Common myeloid progenitor, CD34-positive (primary cell): ENCODE measurements at regions of chr4 and their contacts with region 1.

Region 1: DNA sequence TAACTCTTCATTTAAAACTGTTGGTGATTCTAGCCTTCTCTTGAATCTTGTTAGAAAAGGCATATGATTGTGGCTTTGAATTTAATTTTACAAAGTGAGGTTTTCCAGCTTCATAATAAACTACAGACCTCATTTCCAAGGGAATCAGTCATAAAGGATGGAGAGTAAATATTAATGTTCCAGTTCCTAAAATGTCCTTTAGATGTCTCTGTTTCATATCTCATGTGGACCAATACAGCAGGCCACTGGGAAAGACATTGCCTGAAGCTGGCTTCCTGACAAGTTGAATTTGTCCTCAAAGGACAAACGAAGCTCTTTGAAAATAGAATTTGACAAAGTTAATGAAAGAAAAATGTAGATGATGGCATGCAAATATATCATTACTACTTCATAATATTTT is 125.4 kb downstream of the ZNF330 start:
- DNase-seq: peak; percentile 41 to 55 (median 49)
- H3K4me3 ChIP-seq: no peak overlapping the region
- H3K27ac ChIP-seq: no peak overlapping the region
- H3K4me1 ChIP-seq: peaks cover 0 to 10% (median 8%) of the 10 kb centered on the region in 4 experiments
- H3K27me3 ChIP-seq: no peaks in the 10 kb centered on the region

Region 2: DNA sequence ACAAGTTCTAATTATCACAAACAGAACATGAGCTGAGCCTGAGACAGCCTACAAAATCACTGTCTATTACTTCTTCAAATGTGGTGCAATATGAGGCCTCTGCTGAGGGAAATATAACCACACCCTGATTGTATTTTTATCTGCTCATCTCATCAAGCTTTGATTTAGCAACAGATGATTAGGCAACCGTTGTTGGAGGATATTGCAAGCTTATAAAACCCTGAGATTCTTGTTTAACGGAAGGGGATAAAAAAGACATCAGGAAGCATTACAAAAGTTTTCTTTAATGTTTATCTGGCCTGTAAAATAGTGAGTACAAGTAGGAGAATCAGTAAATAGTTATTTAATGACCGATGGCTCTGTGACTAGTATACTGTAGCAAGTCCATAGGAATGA is 17.0 kb before region 1 on chr4:
- CTCF ChIA-PET with region 1: interaction called, 10 read pairs
- POLR2A ChIA-PET with region 1: no interaction called
- DNase-seq: peak in 2 of 3 donors; percentile 61 to 65
- H3K4me3 ChIP-seq: no peak overlapping the region
- H3K27ac ChIP-seq: no peak overlapping the region
- H3K4me1 ChIP-seq: peaks cover 0 to 2% (median 0%) of the 10 kb centered on the region in 4 experiments
- H3K27me3 ChIP-seq: peaks cover 0 to 14% (median 0%) of the 10 kb centered on the region in 5 experiments

Region 3: GRCh38 chr4:141486375-141486997 is 140.3 kb after region 1 on chr4:
- CTCF ChIA-PET with region 1: no interaction called
- POLR2A ChIA-PET with region 1: no interaction called
- DNase-seq: no peak
- H3K4me3 ChIP-seq: no peak overlapping the region
- H3K27ac ChIP-seq: no peak overlapping the region
- H3K4me1 ChIP-seq: no peaks in the 10 kb centered on the region
- H3K27me3 ChIP-seq: no peaks in the 10 kb centered on the region

Region 4: DNA sequence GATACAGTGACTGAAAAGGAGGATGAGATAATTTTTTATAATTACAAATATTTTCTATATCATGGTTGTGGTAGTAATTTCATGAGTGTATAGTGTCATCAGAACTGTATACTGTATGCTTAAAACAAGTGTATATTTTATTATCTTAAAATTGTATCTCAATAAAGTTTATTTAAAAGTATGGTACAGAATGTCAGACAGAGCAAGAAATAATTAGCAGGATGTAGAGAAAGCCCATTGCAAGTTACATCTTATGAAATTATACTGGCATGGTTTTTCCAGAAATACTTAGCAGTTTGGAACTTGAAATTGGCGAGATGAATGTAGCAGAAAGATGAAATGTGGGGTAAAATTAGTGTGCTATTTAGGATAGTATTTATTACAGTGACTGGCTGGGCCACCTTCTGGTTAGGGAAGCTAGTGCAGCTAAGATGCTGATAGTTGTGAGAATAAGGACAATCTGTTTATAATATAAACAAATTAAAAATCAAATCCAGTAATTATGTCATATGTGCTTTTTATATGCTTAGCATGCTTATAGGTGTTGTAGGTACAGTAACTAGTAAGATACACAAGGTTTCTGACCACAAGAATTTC is 365.0 kb after region 1 on chr4:
- CTCF ChIA-PET with region 1: interaction called, 22 read pairs
- POLR2A ChIA-PET with region 1: no interaction called
- DNase-seq: peak; percentile 20 to 55 (median 46)
- H3K4me3 ChIP-seq: no peak overlapping the region
- H3K27ac ChIP-seq: no peak overlapping the region
- H3K4me1 ChIP-seq: no peaks in the 10 kb centered on the region
- H3K27me3 ChIP-seq: no peaks in the 10 kb centered on the region